HepG2 (cell line): ENCODE measurements at regions of chr14 and their contacts with region 1.

Region 1: GRCh38 chr14:37874429-37875191 is 279.2 kb downstream of the TTC6 start:
- DNase-seq: peak; percentile 90
- ATAC-seq: peak; percentile 97
- H3K4me3 ChIP-seq: peak overlapping the region in 1 of 3 experiments; percentile 49; a peak in 2 of 6 replicates
- H3K27ac ChIP-seq: peak overlapping the region; percentile 4
- H3K4me1 ChIP-seq: peaks cover 42% of the 10 kb centered on the region
- H3K27me3 ChIP-seq: no peaks in the 10 kb centered on the region
- CTCF ChIP-seq: peak; percentile 100
- EP300 ChIP-seq: no peak; a peak in 1 of 4 replicates
- POLR2A ChIP-seq: no peak
- RAD21 ChIP-seq: peak; percentile 100

Region 2: GRCh38 chr14:37246427-37246914 is 628.1 kb before region 1 on chr14:
- CTCF ChIA-PET with region 1: interaction called, 45 read pairs
- POLR2A ChIA-PET with region 1: no interaction called
- in situ Hi-C with region 1: loop called (anchors 5 kb)
- intact Hi-C with region 1: loop called (anchors 1 kb)
- DNase-seq: peak; percentile 86
- ATAC-seq: peak; percentile 79
- H3K4me3 ChIP-seq: no peak overlapping the region
- H3K27ac ChIP-seq: no peak overlapping the region
- H3K4me1 ChIP-seq: peaks cover 33% of the 10 kb centered on the region
- H3K27me3 ChIP-seq: no peaks in the 10 kb centered on the region
- CTCF ChIP-seq: peak; percentile 88
- EP300 ChIP-seq: peak in 1 of 2 experiments; percentile 37; a peak in 1 of 4 replicates
- POLR2A ChIP-seq: no peak
- RAD21 ChIP-seq: peak; percentile 93

Region 3: GRCh38 chr14:37466623-37467088 is 408.0 kb before region 1 on chr14:
- CTCF ChIA-PET with region 1: no interaction called
- POLR2A ChIA-PET with region 1: no interaction called
- in situ Hi-C with region 1: no loop called
- intact Hi-C with region 1: loop called (anchors 5 kb)
- DNase-seq: peak; percentile 100
- ATAC-seq: peak; percentile 97
- H3K4me3 ChIP-seq: peak overlapping the region in 1 of 3 experiments; percentile 12; a peak in 2 of 6 replicates
- H3K27ac ChIP-seq: peak overlapping the region; percentile 81
- H3K4me1 ChIP-seq: peaks cover 46% of the 10 kb centered on the region
- H3K27me3 ChIP-seq: no peaks in the 10 kb centered on the region
- CTCF ChIP-seq: no peak
- EP300 ChIP-seq: peak; percentile 100
- POLR2A ChIP-seq: no peak
- RAD21 ChIP-seq: peak; percentile 67

Region 4: DNA sequence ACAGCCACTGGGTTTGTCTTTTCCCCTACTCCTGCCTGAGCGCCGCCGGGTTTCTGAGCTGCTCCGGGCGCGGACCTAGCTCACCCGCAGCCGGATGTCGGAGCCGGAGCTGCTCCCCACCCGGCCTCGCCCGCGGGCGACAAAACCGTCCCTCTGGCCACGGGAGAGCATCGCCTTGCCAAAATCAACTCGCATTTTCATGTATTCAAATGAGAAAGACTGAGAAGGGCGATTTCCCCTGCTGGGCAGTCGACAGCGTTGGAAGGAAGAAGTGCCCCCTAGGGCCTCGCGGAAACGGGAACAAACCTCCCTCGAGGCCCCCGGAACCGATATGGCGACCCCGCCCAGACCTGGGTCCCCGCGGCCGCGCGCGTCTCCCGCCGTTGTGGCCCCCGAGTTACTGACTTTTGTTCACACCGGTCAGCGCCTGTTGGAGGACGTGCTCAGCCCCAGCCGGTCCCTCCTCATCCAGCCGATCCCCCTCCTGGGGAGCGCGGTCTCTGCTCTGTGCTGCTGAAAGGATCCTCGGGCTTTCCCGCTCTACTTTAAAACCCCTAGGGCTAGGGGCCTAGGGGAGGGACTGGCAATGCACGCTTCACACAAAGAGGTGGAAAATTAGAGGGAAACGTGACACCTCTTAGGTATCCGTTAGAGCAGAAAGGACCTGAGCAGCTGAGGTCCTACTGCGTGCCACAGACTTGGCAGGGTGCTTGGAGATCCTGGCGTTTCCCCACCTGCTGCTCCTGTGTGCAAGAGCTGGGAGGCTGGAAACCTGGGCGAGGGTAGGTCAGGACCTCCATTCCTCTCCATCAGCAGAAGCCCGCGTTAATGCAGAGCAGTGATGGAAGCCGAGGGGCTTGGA is 274.9 kb before region 1 on chr14:
- CTCF ChIA-PET with region 1: interaction called, 3 read pairs
- POLR2A ChIA-PET with region 1: interaction called, 11 read pairs
- in situ Hi-C with region 1: loop called (anchors 5 kb)
- intact Hi-C with region 1: loop called (anchors 1 kb)
- DNase-seq: no peak
- ATAC-seq: no peak
- H3K4me3 ChIP-seq: no peak overlapping the region
- H3K27ac ChIP-seq: no peak overlapping the region
- H3K4me1 ChIP-seq: peaks cover 61% of the 10 kb centered on the region
- H3K27me3 ChIP-seq: no peaks in the 10 kb centered on the region; a peak in 1 of 5 replicates
- CTCF ChIP-seq: no peak
- EP300 ChIP-seq: no peak
- POLR2A ChIP-seq: 0 out of 4 replicates have a peak, but pooled peaks of 1 of the 2 experiments have one; percentile 24
- RAD21 ChIP-seq: no peak

Region 5: DNA sequence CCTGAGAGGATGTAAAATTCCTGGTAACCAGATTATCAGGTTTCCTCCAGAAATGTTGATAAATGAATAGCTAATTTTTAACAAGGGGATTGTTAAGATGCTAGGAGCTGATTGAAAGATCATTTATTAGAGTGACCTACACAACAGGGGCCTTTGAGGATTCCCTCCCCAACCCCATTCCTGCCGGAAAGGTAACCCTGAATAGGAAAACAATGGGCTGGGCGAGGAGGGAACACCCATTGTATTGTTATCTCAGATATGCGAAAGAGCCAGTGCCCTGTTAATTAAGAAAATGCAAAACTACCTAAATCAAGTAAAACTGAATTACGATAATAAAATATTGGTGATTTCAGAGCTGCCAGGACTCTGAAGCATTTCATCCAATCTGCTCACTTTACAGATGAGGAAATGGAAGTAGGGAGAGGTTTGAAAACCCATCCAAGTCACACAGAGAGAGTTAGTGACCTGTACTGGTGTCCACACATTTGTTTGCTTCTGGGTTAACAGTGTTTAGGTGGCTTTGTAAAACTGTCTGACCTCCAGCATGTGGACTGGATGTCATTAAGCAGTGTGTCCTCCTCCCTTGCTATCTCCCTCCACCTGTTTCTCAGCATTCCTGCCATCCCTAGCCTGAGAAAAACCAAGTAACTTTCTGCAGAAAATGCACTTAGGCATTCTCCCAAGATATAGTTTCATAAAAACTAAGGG is 64.4 kb before region 1 on chr14:
- CTCF ChIA-PET with region 1: no interaction called
- POLR2A ChIA-PET with region 1: no interaction called
- in situ Hi-C with region 1: no loop called
- intact Hi-C with region 1: loop called (anchors 2 kb)
- DNase-seq: peak; percentile 37
- ATAC-seq: peak; percentile 92
- H3K4me3 ChIP-seq: no peak overlapping the region
- H3K27ac ChIP-seq: no peak overlapping the region
- H3K4me1 ChIP-seq: peaks cover 15% of the 10 kb centered on the region
- H3K27me3 ChIP-seq: no peaks in the 10 kb centered on the region
- CTCF ChIP-seq: no peak
- EP300 ChIP-seq: no peak
- POLR2A ChIP-seq: no peak
- RAD21 ChIP-seq: no peak